ENCODE measurements at regions of chr6 and their contacts with region 1.

Region 1: DNA sequence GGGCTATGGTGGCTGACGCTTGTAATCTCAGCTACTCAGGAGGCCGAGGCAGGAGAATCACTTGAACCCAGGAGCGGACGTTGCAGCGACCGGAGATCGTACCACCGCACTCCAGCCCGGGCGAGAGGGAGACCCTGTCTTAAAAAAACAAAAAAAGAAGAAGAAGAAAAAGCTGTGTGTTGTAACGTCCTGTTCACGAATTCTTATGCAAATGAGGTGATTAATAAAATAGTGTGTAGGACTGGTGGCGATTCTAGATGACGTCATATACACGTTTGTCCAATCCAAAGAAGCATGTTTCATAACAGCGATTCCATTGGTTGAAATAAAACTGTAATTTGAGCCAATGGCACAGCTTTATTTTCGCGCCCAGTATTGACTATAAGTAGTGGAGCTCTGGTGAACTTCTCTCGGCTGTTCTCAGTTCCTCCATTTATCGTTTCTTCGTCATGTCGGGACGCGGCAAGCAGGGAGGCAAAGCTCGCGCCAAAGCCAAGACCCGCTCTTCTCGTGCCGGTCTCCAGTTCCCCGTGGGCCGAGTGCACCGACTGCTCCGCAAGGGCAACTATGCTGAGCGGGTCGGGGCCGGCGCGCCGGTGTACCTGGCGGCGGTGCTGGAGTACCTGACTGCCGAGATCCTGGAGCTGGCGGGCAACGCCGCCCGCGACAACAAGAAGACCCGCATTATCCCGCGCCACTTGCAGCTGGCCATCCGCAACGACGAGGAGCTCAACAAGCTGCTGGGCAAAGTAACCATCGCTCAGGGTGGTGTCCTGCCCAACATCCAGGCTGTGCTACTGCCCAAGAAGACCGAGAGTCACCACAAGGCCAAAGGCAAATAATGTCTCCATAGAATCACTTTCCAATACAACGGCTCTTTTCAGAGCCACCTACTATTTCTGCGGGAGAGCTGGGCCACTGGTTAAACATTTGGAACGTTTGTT is 47.0 kb downstream of the OR2B2 start:
- DNase-seq: no peak
- H3K4me3 ChIP-seq: peak overlapping the region; percentile 62 to 77 (median 68)
- H3K27ac ChIP-seq: peak overlapping the region; percentile 43 to 70 (median 65)
- H3K4me1 ChIP-seq: peaks cover 35 to 39% (median 37%) of the 10 kb centered on the region in 4 donors
- H3K27me3 ChIP-seq: peaks cover 0 to 45% (median 31%) of the 10 kb centered on the region in 4 donors
- CTCF ChIP-seq: no peak
- EP300 ChIP-seq: no peak
- POLR2A ChIP-seq: no peak

Region 2: GRCh38 chr6:27630727-27631608 is 234.2 kb before region 1 on chr6:
- intact Hi-C with region 1: no loop called
- DNase-seq: no peak
- H3K4me3 ChIP-seq: peak overlapping the region in 3 of 4 donors; percentile 17 to 29 (median 21)
- H3K27ac ChIP-seq: no peak overlapping the region
- H3K4me1 ChIP-seq: peaks cover 6 to 9% (median 8%) of the 10 kb centered on the region in 4 donors
- H3K27me3 ChIP-seq: peaks cover 0 to 90% (median 22%) of the 10 kb centered on the region in 4 donors
- CTCF ChIP-seq: no peak
- EP300 ChIP-seq: no peak
- POLR2A ChIP-seq: no peak

Region 3: DNA sequence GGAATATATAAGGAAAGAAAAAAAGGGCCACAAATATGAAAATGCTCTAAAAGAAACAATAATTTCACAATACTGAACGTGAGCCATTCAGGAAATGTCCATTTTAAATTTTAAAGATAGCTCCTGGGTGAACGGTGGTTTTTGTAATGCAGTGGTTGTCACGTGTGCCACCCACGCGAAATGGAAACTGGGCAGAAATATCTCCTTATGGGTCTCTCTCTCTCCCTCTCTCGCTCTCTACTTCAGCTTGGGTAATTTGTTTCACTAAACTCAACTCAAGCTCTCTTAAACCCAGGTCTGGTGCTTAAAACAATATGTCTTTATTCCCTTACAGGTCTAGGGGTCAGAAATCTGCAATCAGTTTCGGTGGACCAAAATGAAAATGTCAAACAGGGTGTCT is 103.8 kb before region 1 on chr6:
- intact Hi-C with region 1: no loop called
- DNase-seq: no peak
- H3K4me3 ChIP-seq: no peak overlapping the region
- H3K27ac ChIP-seq: no peak overlapping the region
- H3K4me1 ChIP-seq: peaks cover 0 to 7% (median 4%) of the 10 kb centered on the region in 4 donors
- H3K27me3 ChIP-seq: peaks cover 0 to 98% (median 16%) of the 10 kb centered on the region in 4 donors
- CTCF ChIP-seq: no peak
- EP300 ChIP-seq: no peak
- POLR2A ChIP-seq: no peak

Region 4: DNA sequence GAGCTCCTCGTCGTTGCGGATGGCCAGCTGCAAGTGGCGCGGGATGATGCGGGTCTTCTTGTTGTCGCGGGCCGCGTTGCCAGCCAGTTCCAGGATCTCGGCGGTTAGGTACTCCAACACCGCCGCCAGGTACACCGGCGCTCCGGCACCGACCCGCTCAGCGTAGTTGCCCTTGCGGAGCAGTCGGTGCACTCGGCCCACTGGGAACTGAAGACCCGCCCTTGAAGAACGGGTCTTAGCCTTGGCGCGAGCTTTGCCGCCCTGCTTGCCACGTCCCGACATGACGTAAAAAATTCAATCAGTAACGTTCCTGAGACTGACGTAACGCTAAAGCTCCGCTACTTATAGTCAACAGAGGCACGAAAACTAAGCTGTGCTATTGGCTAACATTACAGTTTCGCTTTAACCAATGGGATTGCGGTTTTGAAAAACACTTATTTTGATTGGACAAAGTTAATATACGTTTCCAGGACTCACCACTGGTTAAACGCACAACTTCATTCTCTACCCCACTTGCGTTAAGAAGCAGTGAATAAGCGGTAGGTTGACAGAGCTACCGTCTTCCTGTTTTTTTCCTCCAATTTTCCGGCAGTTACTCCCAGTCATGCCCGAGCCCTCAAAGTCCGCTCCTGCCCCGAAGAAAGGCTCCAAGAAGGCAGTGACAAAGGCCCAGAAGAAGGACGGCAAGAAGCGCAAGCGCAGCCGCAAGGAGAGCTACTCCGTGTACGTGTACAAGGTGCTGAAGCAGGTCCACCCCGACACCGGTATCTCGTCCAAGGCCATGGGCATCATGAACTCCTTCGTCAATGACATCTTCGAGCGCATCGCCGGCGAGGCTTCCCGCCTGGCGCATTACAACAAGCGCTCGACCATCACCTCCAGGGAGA is 26.9 kb before region 1 on chr6:
- intact Hi-C with region 1: loop called (anchors 2 kb)
- DNase-seq: peak; percentile 93
- H3K4me3 ChIP-seq: peak overlapping the region; percentile 69 to 90 (median 77)
- H3K27ac ChIP-seq: peak overlapping the region; percentile 89 to 96 (median 95)
- H3K4me1 ChIP-seq: peaks cover 18 to 30% (median 27%) of the 10 kb centered on the region in 4 donors
- H3K27me3 ChIP-seq: peaks cover 0 to 3% (median 0%) of the 10 kb centered on the region in 4 donors
- CTCF ChIP-seq: peak in 1 of 3 experiments; percentile 14
- EP300 ChIP-seq: no peak
- POLR2A ChIP-seq: peak; percentile 43

Region 5: GRCh38 chr6:28005124-28005890 is 140.1 kb after region 1 on chr6:
- intact Hi-C with region 1: no loop called
- DNase-seq: no peak
- H3K4me3 ChIP-seq: no peak overlapping the region
- H3K27ac ChIP-seq: no peak overlapping the region
- H3K4me1 ChIP-seq: no peaks in the 10 kb centered on the region
- H3K27me3 ChIP-seq: peaks cover 0 to 19% (median 0%) of the 10 kb centered on the region in 4 donors
- CTCF ChIP-seq: no peak
- EP300 ChIP-seq: no peak
- POLR2A ChIP-seq: no peak

Measured in esophagus muscularis mucosa (tissue), 4 donors.